Cardiac septum (tissue), 1 donor: ENCODE measurements at regions of chr15 and their contacts with region 1.

Region 1: DNA sequence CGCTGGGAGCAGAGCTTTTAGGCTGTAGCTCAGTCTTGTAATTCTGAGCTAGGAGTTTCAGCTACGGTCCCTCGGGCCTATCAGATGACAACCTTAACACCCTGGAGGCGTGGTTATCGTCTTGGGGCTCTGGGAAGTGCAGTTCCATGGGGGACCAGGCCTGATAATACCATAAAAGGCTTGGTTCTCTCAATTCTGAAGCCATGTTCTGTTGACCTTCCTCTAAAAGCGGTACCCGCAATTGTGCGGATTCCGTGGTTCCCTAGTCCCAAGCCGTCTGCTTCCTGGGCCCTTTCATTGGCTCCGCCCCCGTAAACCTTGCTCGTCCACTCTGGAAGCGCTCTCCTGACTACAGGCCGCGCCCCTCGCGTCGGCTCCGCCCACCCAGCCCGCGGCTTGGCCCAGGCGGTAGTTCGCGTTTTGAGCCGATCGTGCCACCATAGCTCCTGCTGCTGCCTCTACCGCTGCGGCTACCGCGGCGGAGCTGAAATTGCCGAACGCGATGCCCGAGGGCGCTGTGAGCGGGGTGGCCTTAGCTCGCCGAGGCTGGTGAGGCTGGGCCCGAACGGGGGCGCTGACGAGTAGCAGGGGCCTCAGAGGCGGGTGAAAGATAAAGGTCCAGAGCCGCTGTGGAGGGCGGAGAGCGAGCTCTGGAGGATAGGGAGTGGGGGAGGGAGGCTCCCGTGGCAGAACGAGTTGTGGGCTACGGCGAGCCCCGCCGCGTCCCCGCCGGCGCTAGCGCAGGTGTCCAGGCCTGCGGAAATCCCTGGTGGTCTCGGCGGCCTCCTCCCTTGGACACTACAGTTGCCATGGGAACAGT is at the start of gene MAPKBP1:
- DNase-seq: peak; percentile 99
- total RNA-seq, gene MAPKBP1: 15.6 TPM

Region 2: DNA sequence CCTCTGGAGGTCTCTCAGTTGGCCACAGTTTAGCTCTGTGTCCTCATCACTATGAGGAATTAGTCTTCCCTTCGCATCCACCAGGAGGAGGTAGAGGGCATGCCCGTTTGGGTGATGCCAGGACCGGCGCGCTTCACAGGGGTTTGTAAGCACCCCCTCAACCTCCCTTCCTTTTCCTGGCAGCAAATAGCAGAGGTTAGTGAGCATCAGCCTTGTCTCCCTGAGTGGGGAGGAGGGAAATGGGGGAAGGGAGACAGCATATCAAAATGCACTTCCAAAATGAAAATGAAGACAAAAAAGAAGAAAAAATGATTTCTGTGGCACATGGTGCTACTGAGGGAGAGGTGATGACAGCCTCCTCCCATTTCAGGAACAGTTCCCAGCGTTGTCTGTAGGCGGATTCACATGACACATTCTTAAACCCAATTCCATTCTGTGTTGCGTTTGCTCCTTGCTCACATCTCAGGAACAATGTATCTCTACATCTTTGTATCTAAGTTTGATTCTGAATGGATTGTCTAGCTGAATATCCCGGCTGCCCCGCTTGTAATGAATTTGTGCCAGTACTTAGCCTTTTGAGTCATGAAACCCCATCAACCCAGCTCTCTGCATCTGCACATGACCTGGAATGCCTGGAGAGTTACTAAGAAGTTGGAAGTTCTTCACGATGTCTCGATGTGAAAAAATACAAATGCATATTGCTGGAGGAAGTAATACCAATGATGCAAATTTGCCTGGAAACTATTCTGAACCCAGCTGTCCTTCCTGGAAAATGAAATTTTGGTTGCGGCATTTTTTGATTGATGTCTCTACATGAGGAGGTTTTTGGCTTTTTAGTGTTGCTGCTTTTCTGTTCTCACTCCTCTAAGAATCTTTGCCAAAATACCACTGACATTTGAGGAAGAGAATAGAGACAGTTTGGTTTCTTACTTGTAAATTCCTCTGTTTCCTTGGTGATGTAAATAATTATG is 170.0 kb before region 1 on chr15:
- intact Hi-C with region 1: loop called (anchors 10 kb)
- DNase-seq: peak; percentile 78

Region 3: GRCh38 chr15:41660235-41661077 is 113.8 kb before region 1 on chr15 and contains the start of gene MGA:
- intact Hi-C with region 1: loop called (anchors 5 kb)
- DNase-seq: peak; percentile 94
- total RNA-seq, gene MGA: 37.3 TPM

Region 4: GRCh38 chr15:41894791-41895463 is 120.7 kb after region 1 on chr15:
- intact Hi-C with region 1: loop called (anchors 2 kb)
- DNase-seq: peak; percentile 87